GM12878 (cell line): ENCODE measurements at regions of chr3 and their contacts with region 1.

Region 1: GRCh38 chr3:63993653-63994079 is 29.6 kb downstream of the PSMD6 start:
- DNase-seq: no peak
- ATAC-seq: peak; percentile 98
- H3K4me3 ChIP-seq: no peak overlapping the region
- H3K27ac ChIP-seq: no peak overlapping the region
- H3K4me1 ChIP-seq: no peaks in the 10 kb centered on the region
- H3K27me3 ChIP-seq: no peaks in the 10 kb centered on the region
- CTCF ChIP-seq: peak; percentile 87 to 89 (median 89)
- EP300 ChIP-seq: no peak
- POLR2A ChIP-seq: no peak
- RAD21 ChIP-seq: peak; percentile 86

Region 2: DNA sequence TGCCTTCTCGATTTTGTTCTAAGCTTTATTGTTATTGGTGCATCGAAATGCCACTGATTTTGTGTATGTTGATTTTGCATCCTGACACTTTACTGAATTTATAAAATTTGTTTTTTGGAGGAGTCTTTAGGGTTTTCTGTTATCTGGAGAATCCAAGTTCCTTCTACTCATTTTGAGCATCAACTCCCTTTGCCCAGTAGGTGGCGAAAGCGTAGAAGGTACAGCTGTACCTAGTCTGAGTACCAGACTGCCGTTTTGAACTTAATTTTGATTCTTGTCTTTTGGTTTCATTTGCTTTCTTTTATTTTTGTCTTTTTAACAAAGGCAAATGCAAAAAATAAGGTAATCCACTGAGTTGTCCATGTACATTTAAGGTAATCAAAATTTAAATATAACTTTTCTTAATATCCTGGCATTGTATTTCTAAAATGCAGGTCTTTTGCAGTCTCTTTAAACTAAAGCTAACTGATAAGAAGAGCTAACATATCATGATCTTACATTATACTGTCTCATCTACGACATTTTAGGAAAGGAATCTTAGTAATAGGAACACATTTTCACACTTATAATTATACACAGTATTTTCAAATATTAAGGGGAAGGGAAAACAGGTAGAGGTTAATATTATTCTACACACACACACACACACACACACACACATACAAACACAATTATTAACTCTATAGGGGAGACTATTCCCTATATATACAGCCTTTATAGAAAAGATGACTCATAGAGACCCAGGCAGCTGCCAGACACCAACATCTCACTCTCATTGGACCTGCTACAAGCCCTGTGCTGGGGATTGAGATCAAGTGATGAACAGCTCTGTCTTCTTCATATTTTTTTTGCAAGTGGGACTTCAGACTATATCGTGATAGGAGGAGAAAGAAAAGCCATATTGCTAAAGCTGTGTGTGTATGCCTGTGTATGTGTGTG is 643.8 kb before region 1 on chr3:
- CTCF ChIA-PET with region 1: interaction called, 19 read pairs
- POLR2A ChIA-PET with region 1: no interaction called
- RAD21 ChIA-PET with region 1: interaction called, 6 read pairs
- SMC1A ChIA-PET with region 1: interaction called, 3 read pairs
- in situ Hi-C with region 1: loop called (anchors 5 kb)
- intact Hi-C with region 1: loop called (anchors 2 kb)
- DNase-seq: no peak
- ATAC-seq: peak; percentile 87
- H3K4me3 ChIP-seq: no peak overlapping the region
- H3K27ac ChIP-seq: no peak overlapping the region
- H3K4me1 ChIP-seq: no peaks in the 10 kb centered on the region
- H3K27me3 ChIP-seq: no peaks in the 10 kb centered on the region
- CTCF ChIP-seq: peak; percentile 62 to 69 (median 69)
- EP300 ChIP-seq: no peak
- POLR2A ChIP-seq: no peak
- RAD21 ChIP-seq: peak; percentile 73

Region 3: GRCh38 chr3:63967675-63968611 is 25.7 kb before region 1 on chr3:
- CTCF ChIA-PET with region 1: interaction called, 154 read pairs
- POLR2A ChIA-PET with region 1: interaction called, 10 read pairs
- RAD21 ChIA-PET with region 1: interaction called, 4 read pairs
- SMC1A ChIA-PET with region 1: interaction called, 18 read pairs
- in situ Hi-C with region 1: no loop called
- intact Hi-C with region 1: loop called (anchors 2 kb)
- DNase-seq: peak; percentile 53
- ATAC-seq: peak; percentile 68
- H3K4me3 ChIP-seq: peak overlapping the region; percentile 61
- H3K27ac ChIP-seq: peak overlapping the region; percentile 58
- H3K4me1 ChIP-seq: peaks cover 41% of the 10 kb centered on the region
- H3K27me3 ChIP-seq: no peaks in the 10 kb centered on the region
- CTCF ChIP-seq: no peak
- EP300 ChIP-seq: 0 out of 4 replicates have a peak, but pooled peaks of 1 of the 2 experiments have one; percentile 16
- POLR2A ChIP-seq: no peak
- RAD21 ChIP-seq: no peak

Region 4: GRCh38 chr3:63975723-63976122 is 17.9 kb before region 1 on chr3:
- CTCF ChIA-PET with region 1: interaction called, 58 read pairs
- POLR2A ChIA-PET with region 1: no interaction called
- RAD21 ChIA-PET with region 1: interaction called, 6 read pairs
- SMC1A ChIA-PET with region 1: interaction called, 16 read pairs
- in situ Hi-C with region 1: no loop called
- intact Hi-C with region 1: no loop called
- DNase-seq: no peak
- ATAC-seq: no peak
- H3K4me3 ChIP-seq: no peak overlapping the region
- H3K27ac ChIP-seq: no peak overlapping the region
- H3K4me1 ChIP-seq: peaks cover 5% of the 10 kb centered on the region; the same call in 1 of the 2 replicates
- H3K27me3 ChIP-seq: no peaks in the 10 kb centered on the region
- CTCF ChIP-seq: no peak
- EP300 ChIP-seq: no peak
- POLR2A ChIP-seq: no peak
- RAD21 ChIP-seq: no peak

Region 5: DNA sequence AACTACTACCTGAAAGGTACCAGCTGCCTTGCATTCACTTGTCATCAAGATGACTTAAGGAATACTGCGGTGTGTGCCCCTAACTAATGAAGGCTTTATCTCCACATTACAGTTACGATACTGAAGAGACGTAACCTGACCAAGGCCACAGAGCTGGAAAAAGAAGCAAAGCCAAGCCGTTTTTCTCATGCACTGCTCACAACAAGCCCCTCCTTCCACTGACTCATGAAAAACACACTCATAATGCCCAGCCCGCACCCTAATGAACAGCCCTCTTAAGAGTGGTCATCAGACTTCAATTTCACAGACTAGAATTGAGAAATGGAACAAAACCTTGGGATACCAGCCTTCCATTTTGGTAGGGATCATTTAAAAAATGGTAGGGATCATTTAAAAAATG is 18.0 kb after region 1 on chr3:
- CTCF ChIA-PET with region 1: interaction called, 36 read pairs
- POLR2A ChIA-PET with region 1: interaction called, 3 read pairs
- RAD21 ChIA-PET with region 1: interaction called, 5 read pairs
- SMC1A ChIA-PET with region 1: interaction called, 6 read pairs
- in situ Hi-C with region 1: no loop called
- intact Hi-C with region 1: no loop called
- DNase-seq: no peak
- ATAC-seq: no peak
- H3K4me3 ChIP-seq: no peak overlapping the region
- H3K27ac ChIP-seq: no peak overlapping the region
- H3K4me1 ChIP-seq: peaks cover 6% of the 10 kb centered on the region
- H3K27me3 ChIP-seq: no peaks in the 10 kb centered on the region
- CTCF ChIP-seq: no peak
- EP300 ChIP-seq: no peak
- POLR2A ChIP-seq: no peak
- RAD21 ChIP-seq: no peak

Region 6: GRCh38 chr3:64023187-64023848 is 29.7 kb after region 1 on chr3 and contains the start of gene PSMD6:
- CTCF ChIA-PET with region 1: interaction called, 11 read pairs
- POLR2A ChIA-PET with region 1: interaction called, 3 read pairs
- RAD21 ChIA-PET with region 1: no interaction called
- SMC1A ChIA-PET with region 1: interaction called, 4 read pairs
- in situ Hi-C with region 1: no loop called
- intact Hi-C with region 1: no loop called
- DNase-seq: peak; percentile 49
- ATAC-seq: peak; percentile 95
- H3K4me3 ChIP-seq: peak within 1 kb of the TSS; percentile 86
- H3K27ac ChIP-seq: peak within 1 kb of the TSS; percentile 87
- H3K4me1 ChIP-seq: no peaks in the 10 kb centered on the region
- H3K27me3 ChIP-seq: no peaks in the 10 kb centered on the region
- CTCF ChIP-seq: peak; percentile 99 to 100 (median 100); a peak in 5 of 6 replicates
- EP300 ChIP-seq: 0 out of 4 replicates have a peak, but pooled peaks of 1 of the 2 experiments have one; percentile 18
- POLR2A ChIP-seq: peak; percentile 97
- RAD21 ChIP-seq: peak; percentile 28; the same call in 1 of the 2 replicates
- polyA plus RNA-seq, gene PSMD6: 84.3 to 124 TPM

Region 7: GRCh38 chr3:64093825-64094712 is 100.4 kb after region 1 on chr3:
- CTCF ChIA-PET with region 1: no interaction called
- POLR2A ChIA-PET with region 1: no interaction called
- RAD21 ChIA-PET with region 1: no interaction called
- SMC1A ChIA-PET with region 1: no interaction called
- in situ Hi-C with region 1: no loop called
- intact Hi-C with region 1: no loop called
- DNase-seq: no peak
- ATAC-seq: no peak
- H3K4me3 ChIP-seq: no peak overlapping the region
- H3K27ac ChIP-seq: no peak overlapping the region
- H3K4me1 ChIP-seq: no peaks in the 10 kb centered on the region
- H3K27me3 ChIP-seq: no peaks in the 10 kb centered on the region
- CTCF ChIP-seq: no peak
- EP300 ChIP-seq: no peak
- POLR2A ChIP-seq: no peak
- RAD21 ChIP-seq: no peak